ENCODE measurements at regions of chr1 and their contacts with region 1.

Region 1: GRCh38 chr1:59061876-59062275 is 235.0 kb upstream of the FGGY start:
- DNase-seq: no peak
- ATAC-seq: no peak
- H3K4me3 Mint-ChIP-seq: no peak overlapping the region
- H3K27ac Mint-ChIP-seq: no peak overlapping the region
- H3K4me1 Mint-ChIP-seq: peaks cover 35% of the 10 kb centered on the region
- H3K27me3 Mint-ChIP-seq: no peaks in the 10 kb centered on the region

Region 2: GRCh38 chr1:59046730-59047157 is 15.1 kb before region 1 on chr1:
- CTCF ChIA-PET with region 1: interaction called, 13 read pairs
- POLR2A ChIA-PET with region 1: no interaction called
- DNase-seq: peak; percentile 75
- ATAC-seq: peak; percentile 90
- H3K4me3 Mint-ChIP-seq: peak overlapping the region; percentile 49
- H3K27ac Mint-ChIP-seq: peak overlapping the region; percentile 86
- H3K4me1 Mint-ChIP-seq: peaks cover 49% of the 10 kb centered on the region
- H3K27me3 Mint-ChIP-seq: no peaks in the 10 kb centered on the region

Region 3: GRCh38 chr1:59229138-59229537 is 167.3 kb after region 1 on chr1:
- CTCF ChIA-PET with region 1: no interaction called
- POLR2A ChIA-PET with region 1: no interaction called
- DNase-seq: no peak
- ATAC-seq: no peak
- H3K4me3 Mint-ChIP-seq: no peak overlapping the region
- H3K27ac Mint-ChIP-seq: no peak overlapping the region
- H3K4me1 Mint-ChIP-seq: no peaks in the 10 kb centered on the region
- H3K27me3 Mint-ChIP-seq: no peaks in the 10 kb centered on the region

Measured in activated CD8-positive, alpha-beta T cell treated with anti-CD3 and anti-CD28 coated beads, Interleukin-2, amount 10 ng/mL, durations not matched to agents 7 days and 5 days (primary cell).